ENCODE measurements at regions of chr2 and their contacts with region 1.

Region 1: GRCh38 chr2:143802871-143803650 is 673.8 kb downstream of the ARHGAP15 start:
- DNase-seq: no peak
- H3K4me3 Mint-ChIP-seq: peak overlapping the region; percentile 27
- H3K27ac Mint-ChIP-seq: peak overlapping the region; percentile 73
- H3K4me1 Mint-ChIP-seq: peaks cover 17% of the 10 kb centered on the region
- H3K27me3 Mint-ChIP-seq: peaks cover 7% of the 10 kb centered on the region

Region 2: GRCh38 chr2:143691121-143691520 is 111.9 kb before region 1 on chr2:
- CTCF ChIA-PET with region 1: interaction called, 3 read pairs
- POLR2A ChIA-PET with region 1: no interaction called
- intact Hi-C with region 1: loop called (anchors 2 kb)
- DNase-seq: no peak
- H3K4me3 Mint-ChIP-seq: no peak overlapping the region
- H3K27ac Mint-ChIP-seq: peak overlapping the region; percentile 28
- H3K4me1 Mint-ChIP-seq: peaks cover 66% of the 10 kb centered on the region
- H3K27me3 Mint-ChIP-seq: no peaks in the 10 kb centered on the region

Region 3: DNA sequence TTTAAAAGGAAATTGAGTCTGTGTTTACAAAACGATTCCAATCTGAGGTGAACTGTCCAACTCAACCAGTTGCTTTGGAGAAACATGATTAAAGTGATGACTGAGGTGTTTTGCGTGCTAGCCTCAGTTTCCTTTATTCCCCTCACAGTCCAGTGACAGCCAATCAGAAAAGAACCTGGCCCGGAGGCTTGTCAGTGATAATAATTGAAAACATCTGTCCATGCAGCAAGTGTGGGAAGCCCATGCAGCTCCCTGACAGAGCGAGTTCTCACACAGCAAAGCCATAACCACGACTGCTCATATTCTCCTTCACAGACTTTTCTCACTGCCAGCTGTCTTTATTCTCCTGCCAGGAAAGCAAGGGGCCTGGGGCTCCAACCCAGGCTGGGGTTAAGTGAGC is 60.5 kb before region 1 on chr2:
- CTCF ChIA-PET with region 1: no interaction called
- POLR2A ChIA-PET with region 1: no interaction called
- intact Hi-C with region 1: no loop called
- DNase-seq: no peak
- H3K4me3 Mint-ChIP-seq: no peak overlapping the region
- H3K27ac Mint-ChIP-seq: no peak overlapping the region
- H3K4me1 Mint-ChIP-seq: no peaks in the 10 kb centered on the region
- H3K27me3 Mint-ChIP-seq: no peaks in the 10 kb centered on the region

Region 4: DNA sequence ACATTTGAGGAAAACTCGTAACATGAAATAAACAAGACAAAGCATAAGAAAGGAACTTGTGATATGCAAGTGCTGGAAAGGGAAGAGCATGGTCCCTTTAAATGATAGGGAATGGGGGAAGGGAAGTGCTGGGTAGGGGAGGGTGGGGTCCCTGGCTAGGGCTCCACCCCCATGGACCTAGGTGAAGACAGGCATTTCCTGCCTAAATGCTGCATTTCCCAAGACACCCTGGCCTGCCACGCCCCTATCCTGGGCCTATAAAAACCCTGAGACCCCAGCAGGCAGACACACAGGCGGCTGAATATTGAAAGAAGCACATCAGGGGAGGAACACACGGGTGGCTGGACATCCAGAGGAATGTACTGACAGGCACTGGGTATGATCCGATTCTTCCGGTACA is 217.0 kb after region 1 on chr2:
- CTCF ChIA-PET with region 1: no interaction called
- POLR2A ChIA-PET with region 1: no interaction called
- intact Hi-C with region 1: no loop called
- DNase-seq: no peak
- H3K4me3 Mint-ChIP-seq: no peak overlapping the region
- H3K27ac Mint-ChIP-seq: no peak overlapping the region
- H3K4me1 Mint-ChIP-seq: no peaks in the 10 kb centered on the region
- H3K27me3 Mint-ChIP-seq: no peaks in the 10 kb centered on the region